Activated CD8-positive, alpha-beta T cell treated with anti-CD3 and anti-CD28 coated beads for 36 hours (primary cell): ENCODE measurements at regions of chr7 and their contacts with region 1.

Region 1: GRCh38 chr7:128883622-128884501 is 21.2 kb downstream of the ATP6V1F start:
- DNase-seq: peak; percentile 92
- ATAC-seq: peak; percentile 82
- H3K4me3 Mint-ChIP-seq: peak overlapping the region; percentile 39
- H3K27ac Mint-ChIP-seq: peak overlapping the region; percentile 32
- H3K4me1 Mint-ChIP-seq: peaks cover 2% of the 10 kb centered on the region
- H3K27me3 Mint-ChIP-seq: peaks cover 4% of the 10 kb centered on the region
- CTCF ChIP-seq: peak; percentile 95

Region 2: DNA sequence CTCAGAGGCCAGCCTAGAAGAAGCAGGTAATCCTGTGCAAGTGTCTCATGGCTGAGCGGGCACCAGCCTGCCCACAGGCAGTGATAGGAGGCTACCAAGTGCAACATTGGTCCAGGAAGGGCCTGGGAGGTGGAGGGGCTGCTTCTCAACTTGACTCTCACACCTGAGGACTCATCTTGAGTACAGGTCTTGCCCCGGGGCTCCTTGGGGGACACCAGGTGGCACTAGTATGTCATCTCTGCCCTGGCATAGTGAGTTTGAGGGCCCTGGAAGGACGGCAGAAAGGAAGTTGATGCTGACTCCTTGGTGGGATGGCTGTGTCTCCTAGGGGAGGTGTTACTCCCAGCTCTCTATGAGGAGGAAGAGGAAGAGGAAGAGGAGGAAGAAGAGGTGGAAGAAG is 89.8 kb before region 1 on chr7:
- CTCF ChIA-PET with region 1: interaction called, 30 read pairs
- POLR2A ChIA-PET with region 1: no interaction called
- intact Hi-C with region 1: no loop called
- DNase-seq: peak; percentile 54
- ATAC-seq: no peak
- H3K4me3 Mint-ChIP-seq: no peak overlapping the region
- H3K27ac Mint-ChIP-seq: no peak overlapping the region
- H3K4me1 Mint-ChIP-seq: peaks cover 8% of the 10 kb centered on the region
- H3K27me3 Mint-ChIP-seq: peaks cover 4% of the 10 kb centered on the region
- CTCF ChIP-seq: peak; percentile 26

Region 3: GRCh38 chr7:128841921-128842651 is 41.8 kb before region 1 on chr7:
- CTCF ChIA-PET with region 1: interaction called, 33 read pairs
- POLR2A ChIA-PET with region 1: no interaction called
- intact Hi-C with region 1: no loop called
- DNase-seq: peak; percentile 75
- ATAC-seq: peak; percentile 84
- H3K4me3 Mint-ChIP-seq: no peak overlapping the region
- H3K27ac Mint-ChIP-seq: no peak overlapping the region
- H3K4me1 Mint-ChIP-seq: peaks cover 9% of the 10 kb centered on the region
- H3K27me3 Mint-ChIP-seq: no peaks in the 10 kb centered on the region
- CTCF ChIP-seq: peak; percentile 96

Region 4: DNA sequence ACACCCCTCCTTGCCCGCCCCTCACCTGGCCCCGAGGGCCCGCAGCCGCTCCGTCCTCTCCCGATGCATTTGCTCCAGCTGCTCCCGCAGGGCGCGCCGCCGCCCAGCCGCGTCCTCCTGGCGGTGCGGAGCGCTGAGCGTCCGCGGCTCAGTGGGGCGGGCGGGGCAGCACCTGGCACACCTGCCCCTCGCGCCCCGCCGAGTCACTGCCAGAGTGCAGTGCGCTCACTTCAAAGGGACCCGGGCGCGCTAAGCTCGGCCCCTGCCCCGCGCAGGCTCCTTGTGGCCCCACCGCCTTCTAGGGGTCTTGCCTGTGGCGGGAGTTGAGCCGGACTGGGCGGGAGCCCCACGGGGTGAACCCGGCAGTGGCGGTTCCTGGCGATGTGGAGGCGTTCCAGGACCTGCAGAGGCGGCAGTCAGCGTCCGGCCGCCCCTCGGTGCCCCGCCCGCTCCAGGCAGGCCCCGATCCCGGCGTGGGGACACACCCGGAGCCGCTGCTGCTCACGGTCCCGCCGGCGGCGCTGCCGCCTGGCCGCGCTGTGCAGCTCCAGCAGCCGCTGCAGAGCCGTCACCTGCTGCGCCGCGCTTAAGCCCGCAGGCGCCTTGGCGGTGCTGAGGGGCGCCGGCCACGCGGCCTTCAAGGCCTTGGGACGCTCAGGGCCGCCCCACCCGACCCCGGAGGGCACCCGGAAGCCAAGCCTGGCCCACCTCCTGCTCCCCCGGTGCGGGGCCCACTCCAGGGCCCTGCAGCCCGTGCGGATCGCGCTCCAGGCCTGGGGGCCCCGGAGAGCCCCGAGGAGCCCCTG is 14.5 kb before region 1 on chr7:
- CTCF ChIA-PET with region 1: interaction called, 100 read pairs
- POLR2A ChIA-PET with region 1: interaction called, 4 read pairs
- intact Hi-C with region 1: no loop called
- DNase-seq: peak; percentile 52
- ATAC-seq: peak; percentile 85
- H3K4me3 Mint-ChIP-seq: peak overlapping the region; percentile 50
- H3K27ac Mint-ChIP-seq: no peak overlapping the region
- H3K4me1 Mint-ChIP-seq: peaks cover 16% of the 10 kb centered on the region
- H3K27me3 Mint-ChIP-seq: peaks cover 3% of the 10 kb centered on the region
- CTCF ChIP-seq: no peak

Region 5: GRCh38 chr7:128940494-128941322 is 56.8 kb after region 1 on chr7:
- CTCF ChIA-PET with region 1: no interaction called
- POLR2A ChIA-PET with region 1: no interaction called
- intact Hi-C with region 1: no loop called
- DNase-seq: peak; percentile 19
- ATAC-seq: peak; percentile 15
- H3K4me3 Mint-ChIP-seq: peak overlapping the region; percentile 9
- H3K27ac Mint-ChIP-seq: no peak overlapping the region
- H3K4me1 Mint-ChIP-seq: peaks cover 31% of the 10 kb centered on the region
- H3K27me3 Mint-ChIP-seq: peaks cover 22% of the 10 kb centered on the region
- CTCF ChIP-seq: no peak